Endothelial cell of umbilical vein (primary cell): ENCODE measurements at regions of chr12 and their contacts with region 1.

Region 1: GRCh38 chr12:6540181-6540877 is 6.0 kb downstream of the GAPDH start:
- DNase-seq: peak; percentile 73
- H3K4me3 ChIP-seq: no peak overlapping the region
- H3K27ac ChIP-seq: no peak overlapping the region
- H3K4me1 ChIP-seq: peaks cover 39% of the 10 kb centered on the region
- H3K27me3 ChIP-seq: no peaks in the 10 kb centered on the region
- CTCF ChIP-seq: no peak
- POLR2A ChIP-seq: no peak

Region 2: DNA sequence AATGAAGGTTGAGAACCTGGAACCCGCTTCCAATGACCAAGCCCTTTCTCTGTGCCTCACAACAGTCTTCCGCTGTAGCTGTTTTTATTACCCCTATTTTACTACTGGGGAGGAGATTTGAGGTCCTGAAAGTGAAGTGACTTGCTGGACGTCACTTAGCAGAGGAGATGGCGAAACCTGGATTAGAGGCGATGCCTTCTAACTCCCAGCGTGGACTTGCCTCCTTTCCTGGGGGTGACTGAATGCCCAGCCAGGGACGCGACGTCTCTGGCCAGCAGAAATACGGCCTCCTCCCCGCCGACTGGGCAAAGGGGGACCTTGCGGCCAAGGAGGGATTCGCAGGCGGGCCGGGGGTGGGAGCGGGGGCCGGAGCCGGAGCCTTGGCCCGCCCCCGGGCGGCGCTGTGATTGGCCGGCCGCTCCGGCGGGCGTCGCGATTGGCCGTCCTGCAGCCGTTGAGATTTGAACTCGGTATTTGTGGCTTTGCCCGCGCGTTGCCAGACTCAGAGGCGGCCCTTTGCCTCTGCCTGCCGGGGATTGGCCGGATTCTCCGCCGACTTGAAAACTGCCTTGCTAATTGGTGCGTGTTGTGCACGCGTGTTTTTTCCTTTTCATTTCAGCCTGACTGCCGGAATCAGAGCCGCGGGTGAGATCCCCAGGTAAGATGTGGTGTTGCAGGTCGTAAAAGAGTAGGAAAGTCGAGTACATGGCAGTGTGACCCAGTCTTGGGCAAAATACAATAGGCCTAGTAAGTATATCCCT is 46.7 kb before region 1 on chr12 and contains the start of gene NCAPD2:
- CTCF ChIA-PET with region 1: interaction called, 14 read pairs
- POLR2A ChIA-PET with region 1: no interaction called
- dilution Hi-C with region 1: no loop called
- intact Hi-C with region 1: no loop called
- DNase-seq: peak; percentile 98
- H3K4me3 ChIP-seq: peak within 1 kb of the TSS; percentile 82 to 92 (median 86)
- H3K27ac ChIP-seq: peak within 1 kb of the TSS; percentile 95
- H3K4me1 ChIP-seq: peaks cover 20% of the 10 kb centered on the region
- H3K27me3 ChIP-seq: no peaks in the 10 kb centered on the region
- CTCF ChIP-seq: peak; percentile 21 to 35
- POLR2A ChIP-seq: no peak
- total RNA-seq, gene NCAPD2: 77.3 and 90.1 TPM in 2 replicates

Region 3: GRCh38 chr12:6647083-6647604 is 106.8 kb after region 1 on chr12 and contains the start of gene ACRBP:
- CTCF ChIA-PET with region 1: no interaction called
- POLR2A ChIA-PET with region 1: no interaction called
- dilution Hi-C with region 1: no loop called
- intact Hi-C with region 1: no loop called
- DNase-seq: peak; percentile 73
- H3K4me3 ChIP-seq: peak within 1 kb of the TSS; percentile 31 to 56 (median 48)
- H3K27ac ChIP-seq: no peak within 1 kb of the TSS
- H3K4me1 ChIP-seq: peaks cover 3% of the 10 kb centered on the region
- H3K27me3 ChIP-seq: no peaks in the 10 kb centered on the region
- CTCF ChIP-seq: no peak
- POLR2A ChIP-seq: peak; percentile 88
- total RNA-seq, gene ACRBP: 0.97 and 1.3 TPM in 2 replicates